Psoas muscle (tissue), 8 donors: ENCODE measurements at regions of chrX and their contacts with region 1.

Region 1: GRCh38 chrX:15789979-15790768 is at the start of gene ZRSR2:
- DNase-seq: peak; percentile 87 to 90
- ATAC-seq: peak; percentile 96 to 99 (median 98)
- H3K4me3 ChIP-seq: peak within 1 kb of the TSS; percentile 86
- H3K27ac ChIP-seq: peak within 1 kb of the TSS; percentile 68
- H3K4me1 ChIP-seq: peaks cover 10% of the 10 kb centered on the region
- H3K27me3 ChIP-seq: no peaks in the 10 kb centered on the region
- CTCF ChIP-seq: no peak
- total RNA-seq, gene ZRSR2: 7.4 to 12.7 (median 8.9) TPM

Region 2: GRCh38 chrX:15686818-15687685 is 103.1 kb before region 1 on chrX:
- intact Hi-C with region 1: loop called in 1 of 2 experiments (anchors 10 kb)
- DNase-seq: no peak
- ATAC-seq: peak; percentile 67 to 97 (median 91)
- H3K4me3 ChIP-seq: no peak overlapping the region
- H3K27ac ChIP-seq: no peak overlapping the region
- H3K4me1 ChIP-seq: no peaks in the 10 kb centered on the region
- H3K27me3 ChIP-seq: no peaks in the 10 kb centered on the region
- CTCF ChIP-seq: peak; percentile 73

Region 3: DNA sequence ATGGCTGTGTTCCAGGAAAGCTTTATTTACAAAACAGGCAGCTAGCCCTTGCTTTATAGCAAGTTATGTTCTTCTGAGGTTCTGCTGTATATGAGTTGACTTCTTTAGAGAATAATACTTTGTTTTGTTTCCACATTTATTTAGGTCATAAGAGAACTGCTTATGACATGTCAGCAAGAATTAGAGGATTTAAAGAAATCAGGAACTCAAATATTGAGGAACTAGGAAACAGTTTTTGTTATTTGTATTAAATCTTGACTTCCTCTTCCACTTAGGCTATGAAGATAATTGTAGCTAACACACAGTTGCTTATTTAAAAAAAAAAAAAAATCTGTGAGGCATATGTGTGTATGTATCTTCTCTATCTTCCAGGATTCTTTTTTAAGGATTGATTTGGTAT is 14.4 kb after region 1 on chrX:
- intact Hi-C with region 1: no loop called
- DNase-seq: no peak
- ATAC-seq: no peak
- H3K4me3 ChIP-seq: no peak overlapping the region
- H3K27ac ChIP-seq: no peak overlapping the region
- H3K4me1 ChIP-seq: no peaks in the 10 kb centered on the region
- H3K27me3 ChIP-seq: no peaks in the 10 kb centered on the region
- CTCF ChIP-seq: no peak